ENCODE measurements at regions of chr22 and their contacts with region 1.

Region 1: DNA sequence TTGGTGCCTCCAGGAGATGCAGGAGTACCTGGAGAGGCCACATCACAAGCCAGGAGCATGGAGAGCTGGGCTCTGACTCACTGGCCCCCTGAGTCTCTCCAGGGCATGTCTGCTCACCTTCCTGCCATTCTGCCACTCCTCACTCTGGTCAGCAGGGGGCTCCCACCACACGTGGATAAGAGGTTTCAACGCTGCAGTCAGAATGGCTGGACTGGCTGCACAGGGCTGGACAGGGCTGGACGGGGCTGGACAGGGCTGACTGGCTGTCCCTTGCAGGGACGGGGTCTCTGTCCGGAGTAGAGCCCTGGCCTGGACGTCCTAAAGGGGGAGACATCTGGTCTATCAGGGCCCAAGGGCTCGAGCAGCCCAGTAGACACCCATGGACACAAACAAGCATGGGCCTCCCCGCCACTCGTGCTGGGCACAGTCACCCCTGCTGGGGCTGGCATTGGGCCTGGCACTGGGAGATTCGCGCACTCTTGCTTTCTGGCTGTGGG is 34.6 kb downstream of the CYTH4 start:
- DNase-seq: peak; percentile 83
- H3K4me3 Mint-ChIP-seq: no peak overlapping the region
- H3K27ac Mint-ChIP-seq: no peak overlapping the region
- H3K4me1 Mint-ChIP-seq: peaks cover 29% of the 10 kb centered on the region
- H3K27me3 Mint-ChIP-seq: no peaks in the 10 kb centered on the region

Region 2: GRCh38 chr22:37267135-37267587 is 49.8 kb before region 1 on chr22:
- CTCF ChIA-PET with region 1: interaction called, 6 read pairs
- POLR2A ChIA-PET with region 1: interaction called, 3 read pairs
- intact Hi-C with region 1: loop called (anchors 1 kb)
- DNase-seq: peak; percentile 81
- H3K4me3 Mint-ChIP-seq: peak overlapping the region; percentile 86
- H3K27ac Mint-ChIP-seq: peak overlapping the region; percentile 92
- H3K4me1 Mint-ChIP-seq: peaks cover 34% of the 10 kb centered on the region
- H3K27me3 Mint-ChIP-seq: no peaks in the 10 kb centered on the region

Region 3: DNA sequence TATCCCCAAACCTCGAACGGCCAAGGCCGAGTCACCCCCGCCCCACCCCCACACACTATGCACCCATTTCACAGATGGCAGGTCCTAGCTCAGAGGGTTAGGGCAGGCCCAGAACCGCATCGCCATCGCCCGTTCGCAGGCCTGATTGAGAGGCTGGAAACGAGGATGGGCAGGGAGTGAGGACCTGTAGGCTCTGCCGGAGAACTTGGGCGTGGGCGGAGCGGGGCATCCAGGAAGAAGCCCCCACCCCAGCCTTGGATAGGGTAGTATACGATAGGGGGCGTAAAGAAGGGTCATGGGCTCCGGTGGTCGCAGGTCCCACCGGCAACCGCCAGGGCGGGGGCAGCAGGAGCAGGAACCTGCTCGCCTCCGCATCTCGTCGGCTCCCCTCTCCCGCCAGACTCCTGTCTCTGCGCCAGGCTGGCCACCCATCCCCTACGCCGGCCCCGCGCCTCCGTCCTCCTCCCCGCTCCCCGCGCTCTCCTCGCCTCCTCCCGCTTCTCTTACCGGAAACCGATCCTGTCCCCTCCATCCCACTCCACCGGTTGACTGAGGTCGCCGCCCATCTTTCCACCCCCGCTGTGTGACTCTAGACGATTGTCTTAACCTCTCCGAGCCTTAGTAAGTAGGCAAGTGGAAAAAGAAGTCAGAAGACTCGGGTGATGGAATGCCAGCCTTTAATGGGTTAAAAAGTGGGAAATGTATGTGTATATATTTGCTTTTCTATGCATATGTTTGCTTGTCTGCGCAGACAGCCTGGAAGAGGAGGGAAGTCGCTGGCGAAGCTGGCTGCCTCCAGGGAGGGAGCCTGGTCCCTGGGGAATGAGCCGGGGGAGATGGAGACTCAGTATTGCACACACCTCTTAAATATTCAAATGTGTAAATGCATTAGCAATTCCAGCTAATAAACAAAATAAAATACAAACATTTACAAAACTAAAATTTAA is 18.2 kb after region 1 on chr22:
- CTCF ChIA-PET with region 1: interaction called, 14 read pairs
- POLR2A ChIA-PET with region 1: interaction called, 3 read pairs
- intact Hi-C with region 1: no loop called
- DNase-seq: no peak
- H3K4me3 Mint-ChIP-seq: no peak overlapping the region
- H3K27ac Mint-ChIP-seq: no peak overlapping the region
- H3K4me1 Mint-ChIP-seq: peaks cover 9% of the 10 kb centered on the region
- H3K27me3 Mint-ChIP-seq: peaks cover 42% of the 10 kb centered on the region

Region 4: DNA sequence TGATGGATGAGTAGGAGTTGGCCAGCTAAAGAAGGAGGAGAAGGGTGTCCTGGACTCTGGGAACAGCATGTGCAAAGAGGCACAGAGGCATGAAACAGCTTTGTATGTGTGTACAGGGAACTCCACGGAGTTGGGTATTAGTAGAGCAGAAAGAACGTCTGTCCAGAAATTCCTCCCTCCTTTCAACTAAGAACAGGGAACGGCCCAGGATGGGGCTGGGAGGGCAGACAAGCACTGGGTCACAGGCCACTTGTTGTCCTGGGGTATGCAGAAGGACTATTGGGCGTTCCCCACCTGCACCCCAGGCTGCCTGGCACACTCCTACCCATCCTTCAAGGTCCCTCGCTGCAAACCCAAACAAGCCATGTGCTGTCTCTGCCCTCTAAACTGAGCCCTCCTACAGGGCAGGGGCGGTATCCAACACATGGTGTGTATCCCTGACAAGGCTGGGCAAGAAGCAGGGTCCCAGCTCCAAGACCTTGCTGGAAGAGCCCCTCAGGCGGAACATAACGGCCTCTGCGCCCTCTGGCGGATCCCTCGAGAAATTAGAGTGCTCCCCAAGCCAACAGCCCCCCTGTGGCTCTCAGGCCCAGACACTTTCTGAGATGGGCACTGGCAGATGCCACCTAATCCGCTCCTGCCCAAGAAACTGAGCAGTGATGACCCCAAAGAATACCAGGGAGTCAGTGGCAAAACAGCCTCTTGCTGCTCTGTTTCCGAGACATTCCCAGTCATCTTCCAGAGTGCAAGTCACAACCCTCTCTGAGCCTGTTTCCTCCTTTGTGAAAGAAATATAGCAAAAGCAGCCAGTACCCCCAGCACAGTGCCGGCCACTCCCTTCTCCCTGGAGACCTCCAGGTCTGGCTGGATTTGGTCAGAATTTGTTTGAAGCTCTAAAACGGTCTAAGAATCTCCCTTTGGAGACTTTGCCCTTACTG is 112.0 kb after region 1 on chr22:
- CTCF ChIA-PET with region 1: interaction called, 68 read pairs
- POLR2A ChIA-PET with region 1: no interaction called
- intact Hi-C with region 1: no loop called
- DNase-seq: peak; percentile 66
- H3K4me3 Mint-ChIP-seq: no peak overlapping the region
- H3K27ac Mint-ChIP-seq: no peak overlapping the region
- H3K4me1 Mint-ChIP-seq: peaks cover 27% of the 10 kb centered on the region
- H3K27me3 Mint-ChIP-seq: peaks cover 55% of the 10 kb centered on the region

Region 5: DNA sequence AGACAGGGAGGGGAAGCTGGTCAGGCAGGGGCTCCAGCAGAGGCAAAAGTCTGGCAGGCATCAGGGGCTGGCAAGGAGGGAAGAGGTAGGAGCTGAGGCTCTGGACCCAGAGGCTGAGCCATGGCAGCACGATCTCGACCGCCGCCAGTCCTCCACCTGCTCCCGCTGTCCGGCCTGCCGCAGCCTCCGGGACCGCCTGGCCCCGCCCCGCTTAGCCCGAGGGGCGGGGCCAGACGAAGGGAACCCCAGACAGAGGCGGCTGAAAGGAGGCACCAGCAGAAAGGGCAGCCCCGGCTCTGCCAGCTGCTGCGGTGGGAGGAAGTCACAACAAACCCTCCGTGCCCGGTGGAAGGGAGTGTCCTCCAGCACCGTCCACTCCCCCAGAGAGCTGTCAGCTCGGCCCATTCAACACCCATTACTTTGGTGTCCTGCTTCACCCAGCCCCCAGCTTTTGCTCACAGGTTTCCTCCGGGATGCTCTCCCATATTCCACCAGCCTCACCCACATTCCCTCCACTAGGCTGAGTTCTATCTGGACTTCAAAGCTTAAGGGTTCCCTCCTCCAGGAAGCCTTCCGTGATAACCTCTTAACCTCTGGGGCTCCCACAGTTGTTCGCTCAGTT is 169.4 kb after region 1 on chr22 and contains the start of gene MFNG:
- CTCF ChIA-PET with region 1: interaction called, 10 read pairs
- POLR2A ChIA-PET with region 1: no interaction called
- intact Hi-C with region 1: no loop called
- DNase-seq: peak; percentile 87
- H3K4me3 Mint-ChIP-seq: peak within 1 kb of the TSS; percentile 89
- H3K27ac Mint-ChIP-seq: peak within 1 kb of the TSS; percentile 92
- H3K4me1 Mint-ChIP-seq: peaks cover 60% of the 10 kb centered on the region
- H3K27me3 Mint-ChIP-seq: no peaks in the 10 kb centered on the region
- total RNA-seq, gene MFNG: 101 to 106 TPM